ENCODE measurements at regions of chr1 and their contacts with region 1.

Region 1: DNA sequence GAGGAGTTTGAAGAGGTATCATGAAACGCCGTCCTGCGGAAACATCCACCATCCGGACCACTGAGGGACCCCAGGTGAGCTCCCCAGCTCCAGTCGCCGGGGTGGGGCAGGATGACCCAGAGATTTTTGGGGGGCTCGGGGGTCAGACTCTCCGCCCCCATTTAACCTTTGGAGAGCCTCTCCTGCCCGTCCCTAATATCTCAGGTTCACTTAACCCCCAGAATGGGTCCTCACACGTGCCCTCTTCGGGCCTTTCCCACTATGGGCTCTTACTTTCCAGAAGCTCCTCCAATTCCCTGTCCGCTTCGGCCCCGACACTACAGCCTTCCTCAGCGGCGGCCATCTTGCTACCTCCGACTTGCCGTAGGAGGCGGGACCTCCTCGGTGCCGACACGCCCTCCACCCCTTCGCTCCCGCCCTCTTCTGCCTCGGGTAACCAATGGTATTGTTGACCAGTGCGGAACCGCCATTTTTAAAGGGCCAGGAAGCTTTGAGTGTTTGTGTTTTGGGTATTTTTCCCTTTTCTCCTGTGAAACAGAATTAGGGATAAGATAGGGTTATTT is at the start of gene PEX19:
- DNase-seq: peak; percentile 94
- ATAC-seq: peak; percentile 100
- H3K4me3 ChIP-seq: peak within 1 kb of the TSS; percentile 60 to 88 (median 78)
- H3K4me3 Mint-ChIP-seq: peak within 1 kb of the TSS; percentile 97
- H3K27ac ChIP-seq: peak within 1 kb of the TSS; percentile 26 to 75
- H3K27ac Mint-ChIP-seq: peak within 1 kb of the TSS; percentile 96
- H3K4me1 ChIP-seq: peaks cover 9 to 21% of the 10 kb centered on the region in 2 donors
- H3K4me1 Mint-ChIP-seq: peaks cover 21% of the 10 kb centered on the region
- H3K27me3 ChIP-seq: no peaks in the 10 kb centered on the region
- H3K27me3 Mint-ChIP-seq: no peaks in the 10 kb centered on the region
- CTCF ChIP-seq: no peak
- total RNA-seq, gene PEX19: 56.0 and 58.4 TPM in 2 replicates

Region 2: DNA sequence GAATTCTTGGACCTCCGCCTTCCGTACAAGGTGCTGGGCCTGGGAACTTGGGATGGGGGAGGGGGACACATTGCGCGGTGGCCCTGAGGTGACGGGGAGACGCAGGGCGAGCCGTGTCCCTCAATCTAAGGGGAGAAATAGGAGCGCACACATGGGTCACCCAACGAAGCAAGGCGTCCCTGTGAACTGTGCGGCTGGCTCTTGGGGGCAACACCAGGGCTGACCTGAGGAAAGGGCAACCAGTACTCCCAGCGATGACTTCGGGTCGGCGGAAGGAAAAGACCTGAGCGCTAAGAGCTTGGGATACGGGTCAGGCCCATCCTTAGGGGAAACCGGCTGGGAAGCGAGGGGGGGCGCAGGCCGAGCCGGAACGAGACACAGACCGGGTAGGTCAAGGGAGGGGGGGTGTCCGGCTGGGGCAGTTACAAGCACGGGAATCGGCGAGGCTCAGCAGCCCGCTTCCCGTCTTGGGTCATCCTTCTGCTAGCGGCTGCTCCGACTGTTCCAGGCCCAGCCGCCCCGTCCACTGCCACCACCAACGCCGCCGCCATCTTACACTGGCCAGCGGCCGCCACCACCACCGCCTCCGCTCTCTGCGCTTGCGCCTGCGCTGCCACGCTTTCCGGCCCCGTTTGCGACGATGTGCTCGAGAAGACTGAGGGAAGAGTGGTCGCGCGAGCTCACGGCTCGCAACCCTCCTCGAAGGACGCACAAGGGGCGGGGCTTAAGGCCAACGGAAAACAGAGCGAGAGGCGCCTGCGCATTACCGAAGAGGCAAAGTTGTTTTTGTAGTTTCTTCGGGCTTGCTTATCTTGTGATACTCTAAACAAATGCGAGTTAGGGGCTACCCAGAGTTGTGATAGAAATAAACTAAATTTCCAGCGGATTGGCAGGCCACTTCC is 22.7 kb before region 1 on chr1 and contains the start of gene DCAF8:
- CTCF ChIA-PET with region 1: interaction called, 27 read pairs
- POLR2A ChIA-PET with region 1: interaction called, 20 read pairs
- intact Hi-C with region 1: loop called (anchors 1 kb)
- DNase-seq: peak; percentile 98
- ATAC-seq: peak; percentile 92
- H3K4me3 ChIP-seq: peak within 1 kb of the TSS; percentile 96 to 100 (median 99)
- H3K4me3 Mint-ChIP-seq: peak within 1 kb of the TSS; percentile 100
- H3K27ac ChIP-seq: peak within 1 kb of the TSS; percentile 96 to 97
- H3K27ac Mint-ChIP-seq: peak within 1 kb of the TSS; percentile 92
- H3K4me1 ChIP-seq: peaks cover 20 to 22% of the 10 kb centered on the region in 2 donors
- H3K4me1 Mint-ChIP-seq: peaks cover 41% of the 10 kb centered on the region
- H3K27me3 ChIP-seq: no peaks in the 10 kb centered on the region
- H3K27me3 Mint-ChIP-seq: no peaks in the 10 kb centered on the region
- CTCF ChIP-seq: no peak
- total RNA-seq, gene DCAF8: 247 and 266 TPM in 2 replicates